B cell (primary cell): ENCODE measurements at regions of chr10 and their contacts with region 1.

Region 1: GRCh38 chr10:121835376-121835775 is 92.5 kb downstream of the ATE1 start:
- DNase-seq: no peak
- ATAC-seq: no peak
- H3K4me3 ChIP-seq: no peak overlapping the region
- H3K4me3 Mint-ChIP-seq: no peak overlapping the region
- H3K27ac ChIP-seq: no peak overlapping the region
- H3K27ac Mint-ChIP-seq: no peak overlapping the region
- H3K4me1 ChIP-seq: no peaks in the 10 kb centered on the region
- H3K4me1 Mint-ChIP-seq: peaks cover 8% of the 10 kb centered on the region
- H3K27me3 ChIP-seq: no peaks in the 10 kb centered on the region
- H3K27me3 Mint-ChIP-seq: no peaks in the 10 kb centered on the region
- CTCF ChIP-seq: no peak

Region 2: GRCh38 chr10:121823993-121824463 is 11.3 kb before region 1 on chr10:
- CTCF ChIA-PET with region 1: interaction called, 11 read pairs
- POLR2A ChIA-PET with region 1: no interaction called
- intact Hi-C with region 1: no loop called
- DNase-seq: peak; percentile 12
- ATAC-seq: no peak
- H3K4me3 ChIP-seq: no peak overlapping the region
- H3K4me3 Mint-ChIP-seq: no peak overlapping the region
- H3K27ac ChIP-seq: no peak overlapping the region
- H3K27ac Mint-ChIP-seq: no peak overlapping the region
- H3K4me1 ChIP-seq: no peaks in the 10 kb centered on the region
- H3K4me1 Mint-ChIP-seq: no peaks in the 10 kb centered on the region
- H3K27me3 ChIP-seq: no peaks in the 10 kb centered on the region
- H3K27me3 Mint-ChIP-seq: no peaks in the 10 kb centered on the region
- CTCF ChIP-seq: peak; percentile 69